HEK293 (cell line): ENCODE measurements at regions of chr2 and their contacts with region 1.

Region 1: DNA sequence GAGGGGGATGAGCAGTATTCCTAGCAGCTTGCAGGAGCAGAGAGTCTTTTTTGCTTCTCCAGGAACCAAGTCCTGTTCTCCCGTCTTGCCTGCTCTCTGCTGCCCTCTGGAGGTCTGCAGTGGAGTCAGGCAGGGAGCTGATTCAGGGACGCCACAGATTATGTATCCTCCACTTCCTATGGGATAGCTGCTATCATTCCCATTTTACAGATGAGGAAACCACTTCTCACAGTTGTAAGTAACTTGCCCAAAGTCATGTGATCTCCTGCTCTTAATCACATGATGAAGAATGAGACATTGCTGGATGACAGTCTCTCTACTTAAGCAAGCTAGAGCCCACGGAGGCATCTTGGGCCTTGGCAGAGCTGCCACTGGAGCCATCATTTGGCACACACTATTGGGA is 8.3 kb downstream of the SLC4A5 start:
- H3K4me3 ChIP-seq: no peak overlapping the region
- H3K27ac ChIP-seq: no peak overlapping the region
- H3K4me1 ChIP-seq: no peaks in the 10 kb centered on the region
- CTCF ChIP-seq: peak; percentile 71

Region 2: GRCh38 chr2:74250189-74250631 is 84.7 kb before region 1 on chr2:
- CTCF ChIA-PET with region 1: interaction called, 54 read pairs
- POLR2A ChIA-PET with region 1: no interaction called
- H3K4me3 ChIP-seq: no peak overlapping the region
- H3K27ac ChIP-seq: no peak overlapping the region
- H3K4me1 ChIP-seq: no peaks in the 10 kb centered on the region
- CTCF ChIP-seq: no peak

Region 3: DNA sequence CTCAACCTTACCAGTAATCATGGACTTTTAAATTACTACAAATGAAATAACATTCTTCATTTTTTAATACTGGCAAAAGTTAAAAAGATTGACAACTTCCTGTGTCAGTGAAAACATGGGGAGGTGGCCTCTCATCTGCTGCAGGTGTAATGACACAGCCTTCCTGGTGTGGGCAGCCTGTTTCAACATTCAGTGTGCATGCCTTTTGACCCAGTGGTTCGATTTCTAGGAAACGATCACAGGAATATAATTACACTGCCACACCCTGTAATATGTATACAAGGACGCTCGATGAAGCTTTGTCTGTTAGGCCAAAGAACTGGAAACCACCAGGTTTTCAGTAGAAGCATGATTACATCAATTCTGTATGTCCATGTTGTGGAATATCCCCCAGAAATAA is 67.9 kb before region 1 on chr2:
- CTCF ChIA-PET with region 1: interaction called, 61 read pairs
- POLR2A ChIA-PET with region 1: no interaction called
- H3K4me3 ChIP-seq: no peak overlapping the region
- H3K27ac ChIP-seq: no peak overlapping the region
- H3K4me1 ChIP-seq: peaks cover 3% of the 10 kb centered on the region; the same call in 1 of the 2 replicates
- CTCF ChIP-seq: 0 out of 2 replicates have a peak, but pooled peaks have one; percentile 18

Region 4: GRCh38 chr2:74314107-74314506 is 20.8 kb before region 1 on chr2:
- CTCF ChIA-PET with region 1: interaction called, 22 read pairs
- POLR2A ChIA-PET with region 1: no interaction called
- H3K4me3 ChIP-seq: no peak overlapping the region
- H3K27ac ChIP-seq: no peak overlapping the region
- H3K4me1 ChIP-seq: no peaks in the 10 kb centered on the region
- CTCF ChIP-seq: no peak

Region 5: GRCh38 chr2:74361327-74361726 is 26.4 kb after region 1 on chr2:
- CTCF ChIA-PET with region 1: interaction called, 19 read pairs
- POLR2A ChIA-PET with region 1: no interaction called
- H3K4me3 ChIP-seq: no peak overlapping the region
- H3K27ac ChIP-seq: no peak overlapping the region
- H3K4me1 ChIP-seq: no peaks in the 10 kb centered on the region
- CTCF ChIP-seq: no peak

Region 6: DNA sequence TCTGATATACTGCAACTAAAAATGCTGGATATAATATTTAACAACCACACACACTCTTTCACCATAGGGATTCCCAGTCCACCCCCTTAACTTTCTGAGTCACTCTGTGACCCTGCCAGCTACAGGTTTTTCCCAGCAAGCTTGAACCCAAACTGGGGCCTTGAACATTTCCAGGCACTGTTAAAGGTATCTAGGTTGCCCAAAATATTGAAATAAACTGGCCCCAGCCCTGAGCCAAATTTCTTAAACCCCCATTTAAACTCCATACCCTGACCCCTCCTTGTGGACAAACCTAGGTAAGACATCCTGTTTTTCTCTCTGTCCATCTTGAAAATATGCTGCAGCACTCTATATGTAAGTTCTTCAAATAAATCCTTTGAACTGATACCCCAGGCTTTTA is 64.9 kb after region 1 on chr2:
- CTCF ChIA-PET with region 1: interaction called, 12 read pairs
- POLR2A ChIA-PET with region 1: interaction called, 5 read pairs
- H3K4me3 ChIP-seq: no peak overlapping the region
- H3K27ac ChIP-seq: no peak overlapping the region
- H3K4me1 ChIP-seq: no peaks in the 10 kb centered on the region
- CTCF ChIP-seq: no peak